Spleen (tissue), 13 donors: ENCODE measurements at regions of chr9 and their contacts with region 1.

Region 1: DNA sequence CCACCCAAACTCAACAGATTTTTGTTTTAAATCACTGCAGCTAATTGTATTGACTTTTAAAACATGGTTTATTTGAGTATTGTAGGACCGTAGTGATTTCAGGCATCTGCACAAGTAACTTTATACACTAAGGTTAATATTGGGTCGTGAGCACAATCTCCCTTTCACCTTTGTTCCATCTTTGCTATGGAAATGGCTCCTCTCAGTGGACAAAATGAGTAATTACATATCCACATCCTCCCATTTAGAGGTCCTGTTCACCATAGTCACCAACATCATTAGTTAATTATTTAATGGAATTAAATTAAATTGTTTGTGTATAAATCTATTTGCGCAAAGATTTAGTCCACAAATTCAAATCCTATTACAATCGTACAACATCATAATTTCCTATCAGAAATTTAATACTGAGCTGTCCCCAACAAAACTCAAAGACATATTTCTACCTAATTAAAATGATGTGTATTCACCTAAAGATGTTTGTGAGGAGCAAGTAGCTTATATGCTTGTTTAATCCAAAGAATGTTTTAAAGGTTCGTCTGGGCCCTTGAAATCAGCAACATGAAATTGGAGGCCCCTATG is 173.0 kb upstream of the DAPK1 start:
- DNase-seq: no peak
- H3K4me3 ChIP-seq: no peak overlapping the region
- H3K27ac ChIP-seq: no peak overlapping the region
- H3K4me1 ChIP-seq: no peaks in the 10 kb centered on the region
- H3K27me3 ChIP-seq: peaks cover 0 to 12% (median 0%) of the 10 kb centered on the region in 7 donors
- CTCF ChIP-seq: peak; percentile 53 to 88 (median 80)
- POLR2A ChIP-seq: no peak

Region 2: DNA sequence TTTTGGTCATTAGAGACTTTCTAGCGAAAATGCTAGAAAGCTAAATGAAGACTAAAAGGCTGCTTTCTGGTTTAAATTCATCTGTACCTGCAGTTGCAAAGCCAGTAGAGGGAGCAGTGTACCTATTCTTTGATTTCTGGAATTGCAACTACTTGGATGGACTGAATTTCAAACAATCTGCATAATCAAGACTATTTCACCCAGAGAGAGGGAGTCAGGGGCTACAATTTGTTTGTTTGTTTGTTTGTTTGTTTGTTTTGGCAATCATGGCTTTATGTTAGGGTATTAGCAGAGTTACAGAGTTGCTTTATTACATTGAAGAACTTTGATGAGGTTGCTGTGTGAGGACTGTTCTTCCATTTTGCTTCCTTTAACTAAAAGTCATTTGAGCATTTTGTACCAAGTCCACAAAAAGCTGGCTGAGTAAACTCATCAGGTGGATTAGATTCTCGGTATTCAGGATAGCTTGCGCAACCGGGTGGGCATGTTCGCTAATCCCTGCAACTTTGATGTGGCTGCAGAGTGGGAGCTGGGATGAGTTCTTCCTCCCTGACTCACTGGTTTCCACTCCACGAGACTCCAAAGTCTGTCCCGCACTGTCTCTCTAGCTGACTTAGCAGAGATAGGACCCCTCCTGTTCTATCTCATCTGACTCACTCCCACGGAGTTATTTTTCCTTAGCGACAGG is 890.5 kb before region 1 on chr9:
- intact Hi-C with region 1: loop called (anchors 5 kb)
- DNase-seq: no peak
- H3K4me3 ChIP-seq: no peak overlapping the region
- H3K27ac ChIP-seq: no peak overlapping the region
- H3K4me1 ChIP-seq: no peaks in the 10 kb centered on the region
- H3K27me3 ChIP-seq: peaks cover 0 to 15% (median 0%) of the 10 kb centered on the region in 7 donors
- CTCF ChIP-seq: peak in 9 of 11 experiments; percentile 27 to 65 (median 59)
- POLR2A ChIP-seq: no peak

Region 3: DNA sequence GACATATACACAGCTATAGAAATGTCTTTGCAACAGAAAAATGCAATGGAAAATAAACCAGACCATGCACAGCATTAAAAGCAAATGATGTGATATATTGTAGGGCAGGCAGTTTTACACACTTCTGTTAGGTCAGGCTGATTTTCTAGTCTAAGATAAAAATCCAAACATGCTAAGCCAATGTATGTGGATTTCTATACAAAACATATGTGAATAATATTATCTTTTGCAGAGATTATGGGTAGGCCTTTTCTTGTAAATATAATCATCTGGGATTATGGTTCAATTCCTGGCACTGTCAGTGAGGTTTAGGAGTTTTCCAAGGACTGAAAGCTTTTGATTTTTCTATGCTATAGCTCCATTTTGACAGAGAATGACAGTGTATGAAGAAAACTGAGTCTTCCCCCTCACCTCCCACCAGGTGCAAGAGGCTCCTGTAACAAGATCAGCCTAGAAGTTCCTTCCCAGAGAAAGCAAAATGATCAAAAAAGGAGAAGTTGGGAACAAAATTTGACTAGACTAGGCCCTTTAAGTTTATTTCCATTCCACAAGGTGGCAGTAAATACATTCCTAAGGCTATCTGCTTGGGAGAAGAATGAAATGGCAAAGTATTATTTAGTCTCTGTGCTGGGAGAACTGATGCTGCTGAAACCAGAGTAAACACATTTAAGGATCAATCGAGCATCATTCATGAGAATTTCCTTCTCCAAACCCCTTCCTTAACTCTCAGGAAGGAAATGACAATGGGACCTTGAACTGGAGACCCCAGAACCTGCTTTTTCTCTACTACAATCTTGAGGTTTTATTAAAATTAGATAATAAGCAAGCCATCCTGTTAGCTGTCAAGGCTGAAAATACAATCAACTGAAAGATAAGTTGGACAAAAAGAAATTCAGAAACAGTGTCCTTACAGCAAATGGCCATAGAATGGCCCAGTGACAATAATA is 837.5 kb before region 1 on chr9:
- intact Hi-C with region 1: loop called (anchors 5 kb)
- DNase-seq: no peak
- H3K4me3 ChIP-seq: no peak overlapping the region
- H3K27ac ChIP-seq: no peak overlapping the region
- H3K4me1 ChIP-seq: no peaks in the 10 kb centered on the region
- H3K27me3 ChIP-seq: no peaks in the 10 kb centered on the region
- CTCF ChIP-seq: peak in 9 of 11 experiments; percentile 19 to 54 (median 45)
- POLR2A ChIP-seq: no peak